HCT116 (cell line): ENCODE measurements at regions of chr1 and their contacts with region 1.

Region 1: GRCh38 chr1:78601068-78601467 is 19.2 kb upstream of the IFI44L start:
- DNase-seq: no peak
- ATAC-seq: no peak
- H3K4me3 ChIP-seq: no peak overlapping the region
- H3K27ac ChIP-seq: no peak overlapping the region
- H3K4me1 ChIP-seq: no peaks in the 10 kb centered on the region
- H3K27me3 ChIP-seq: no peaks in the 10 kb centered on the region
- CTCF ChIP-seq: no peak
- POLR2A ChIP-seq: no peak
- RAD21 ChIP-seq: no peak

Region 2: GRCh38 chr1:78132174-78132947 is 468.7 kb before region 1 on chr1:
- CTCF ChIA-PET with region 1: interaction called, 40 read pairs
- POLR2A ChIA-PET with region 1: no interaction called
- RAD21 ChIA-PET with region 1: no interaction called
- intact Hi-C with region 1: no loop called
- DNase-seq: no peak
- ATAC-seq: no peak
- H3K4me3 ChIP-seq: no peak overlapping the region
- H3K27ac ChIP-seq: no peak overlapping the region
- H3K4me1 ChIP-seq: no peaks in the 10 kb centered on the region
- H3K27me3 ChIP-seq: no peaks in the 10 kb centered on the region
- CTCF ChIP-seq: no peak
- POLR2A ChIP-seq: no peak
- RAD21 ChIP-seq: no peak

Region 3: GRCh38 chr1:78536427-78536826 is 64.6 kb before region 1 on chr1:
- CTCF ChIA-PET with region 1: no interaction called
- POLR2A ChIA-PET with region 1: no interaction called
- RAD21 ChIA-PET with region 1: no interaction called
- intact Hi-C with region 1: no loop called
- DNase-seq: no peak
- ATAC-seq: no peak
- H3K4me3 ChIP-seq: no peak overlapping the region
- H3K27ac ChIP-seq: no peak overlapping the region
- H3K4me1 ChIP-seq: no peaks in the 10 kb centered on the region
- H3K27me3 ChIP-seq: no peaks in the 10 kb centered on the region
- CTCF ChIP-seq: no peak
- POLR2A ChIP-seq: no peak
- RAD21 ChIP-seq: no peak